Esophagus muscularis mucosa (tissue), 4 donors: ENCODE measurements at regions of chr7 and their contacts with region 1.

Region 1: DNA sequence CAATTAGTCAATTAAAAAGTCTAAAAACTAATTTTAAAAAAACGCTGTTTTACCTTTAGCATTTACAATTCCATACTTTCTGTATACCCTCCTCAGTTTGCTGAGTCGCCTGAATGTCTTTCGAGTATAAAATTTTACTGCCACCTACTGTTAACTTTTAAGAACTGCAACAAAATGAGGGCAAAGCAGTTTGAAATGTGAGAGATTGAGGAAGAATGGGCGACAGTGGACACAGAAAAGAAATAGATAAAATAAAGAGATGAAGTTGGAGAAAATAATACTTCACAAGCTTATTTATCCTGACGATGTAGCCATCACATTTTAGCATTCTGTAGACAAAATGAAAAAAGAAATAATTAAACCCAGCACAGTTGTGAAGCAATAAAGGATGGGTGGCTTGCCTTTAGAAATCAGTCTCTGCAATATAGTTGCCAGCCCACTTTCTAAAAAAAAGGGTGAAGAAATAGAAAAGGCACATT is 110.8 kb upstream of the PTN start:
- DNase-seq: no peak
- H3K4me3 ChIP-seq: peak overlapping the region in 1 of 4 donors; percentile 2
- H3K27ac ChIP-seq: peak overlapping the region in 3 of 4 donors; percentile 50 to 59 (median 57)
- H3K4me1 ChIP-seq: peaks cover 3 to 19% (median 12%) of the 10 kb centered on the region in 4 donors
- H3K27me3 ChIP-seq: no peaks in the 10 kb centered on the region
- CTCF ChIP-seq: peak; percentile 68 to 74 (median 70)
- EP300 ChIP-seq: no peak
- POLR2A ChIP-seq: no peak

Region 2: GRCh38 chr7:136405931-136406777 is 1048.1 kb before region 1 on chr7:
- intact Hi-C with region 1: loop called (anchors 5 kb)
- DNase-seq: no peak
- H3K4me3 ChIP-seq: no peak overlapping the region
- H3K27ac ChIP-seq: no peak overlapping the region
- H3K4me1 ChIP-seq: peaks cover 0 to 8% (median 5%) of the 10 kb centered on the region in 4 donors
- H3K27me3 ChIP-seq: no peaks in the 10 kb centered on the region
- CTCF ChIP-seq: peak; percentile 46 to 85 (median 66)
- EP300 ChIP-seq: no peak
- POLR2A ChIP-seq: no peak

Region 3: DNA sequence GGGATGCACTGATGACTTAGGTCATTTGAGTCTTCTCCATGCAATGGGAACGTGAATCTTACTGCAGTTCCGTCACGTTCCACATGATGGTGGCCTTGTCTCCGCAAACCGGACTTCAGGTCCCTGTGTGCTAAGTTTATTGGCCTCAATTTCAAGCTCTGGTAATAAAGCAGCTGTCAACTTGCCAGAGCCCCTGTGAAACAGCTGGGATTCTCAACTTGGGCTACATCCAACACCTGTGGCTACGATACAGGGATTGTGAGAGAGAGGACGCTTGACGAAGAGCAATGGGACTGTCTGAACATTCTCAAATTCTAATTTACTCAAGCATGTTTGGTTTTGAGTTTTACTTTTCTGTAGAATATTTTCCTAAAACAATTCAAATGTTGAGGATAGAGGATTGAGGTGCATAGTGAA is 285.0 kb before region 1 on chr7:
- intact Hi-C with region 1: loop called (anchors 5 kb)
- DNase-seq: no peak
- H3K4me3 ChIP-seq: no peak overlapping the region
- H3K27ac ChIP-seq: no peak overlapping the region
- H3K4me1 ChIP-seq: peaks cover 0 to 13% (median 3%) of the 10 kb centered on the region in 4 donors
- H3K27me3 ChIP-seq: no peaks in the 10 kb centered on the region
- CTCF ChIP-seq: peak; percentile 48 to 69 (median 61)
- EP300 ChIP-seq: no peak
- POLR2A ChIP-seq: no peak

Region 4: DNA sequence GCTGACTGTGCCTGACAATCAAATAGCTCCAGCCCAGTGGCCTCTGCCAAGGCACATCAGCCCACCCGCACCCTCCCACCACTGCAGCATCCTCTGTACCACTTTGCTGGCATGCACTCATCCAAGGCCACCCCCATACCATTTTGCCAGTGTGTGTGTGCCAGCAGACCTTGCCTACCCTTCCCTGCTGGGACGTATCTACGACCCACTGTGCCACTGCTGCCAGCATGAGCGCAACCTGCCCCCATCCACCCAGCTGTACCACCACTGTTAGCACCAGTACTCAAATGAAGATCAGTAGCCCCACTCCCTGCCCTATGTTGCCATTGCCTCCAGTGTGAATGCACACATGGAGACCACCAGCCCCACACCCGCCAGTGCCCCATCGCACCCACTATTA is 38.6 kb after region 1 on chr7:
- intact Hi-C with region 1: no loop called
- DNase-seq: no peak
- H3K4me3 ChIP-seq: no peak overlapping the region
- H3K27ac ChIP-seq: no peak overlapping the region
- H3K4me1 ChIP-seq: no peaks in the 10 kb centered on the region
- H3K27me3 ChIP-seq: no peaks in the 10 kb centered on the region
- CTCF ChIP-seq: no peak
- EP300 ChIP-seq: no peak
- POLR2A ChIP-seq: no peak

Region 5: DNA sequence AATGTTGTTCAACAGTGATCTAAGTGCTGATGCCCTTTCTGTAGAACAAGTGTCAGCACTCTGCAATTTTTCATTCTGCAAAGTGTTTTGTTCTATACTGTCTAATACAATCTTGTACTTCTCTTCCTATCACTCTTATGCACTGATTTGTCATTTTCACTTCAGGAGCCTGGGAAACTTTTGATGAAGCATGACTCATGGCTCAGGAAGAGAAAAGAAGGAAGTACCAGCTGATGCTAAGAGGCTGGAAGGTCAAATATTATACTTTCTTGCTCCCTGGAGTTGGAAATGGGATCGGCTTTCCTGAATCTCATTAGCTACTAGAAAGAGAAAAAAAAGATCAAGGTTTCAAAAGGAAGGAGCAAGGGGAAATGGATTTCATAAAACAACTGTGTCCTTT is 346.7 kb after region 1 on chr7:
- intact Hi-C with region 1: no loop called
- DNase-seq: no peak
- H3K4me3 ChIP-seq: no peak overlapping the region
- H3K27ac ChIP-seq: no peak overlapping the region
- H3K4me1 ChIP-seq: peaks cover 0 to 4% (median 0%) of the 10 kb centered on the region in 4 donors
- H3K27me3 ChIP-seq: no peaks in the 10 kb centered on the region
- CTCF ChIP-seq: no peak
- EP300 ChIP-seq: no peak
- POLR2A ChIP-seq: no peak